Ascending aorta (tissue), 2 donors: ENCODE measurements at regions of chr10 and their contacts with region 1.

Region 1: GRCh38 chr10:27620430-27621397 is 116.6 kb downstream of the RAB18 start:
- DNase-seq: peak in 1 of 2 donors; percentile 81
- H3K4me3 ChIP-seq: peak overlapping the region; percentile 18 to 40
- H3K27ac ChIP-seq: peak overlapping the region; percentile 82 to 86
- H3K4me1 ChIP-seq: peaks cover 4 to 17% of the 10 kb centered on the region in 2 donors
- H3K27me3 ChIP-seq: no peaks in the 10 kb centered on the region
- CTCF ChIP-seq: no peak

Region 2: GRCh38 chr10:27584302-27584701 is 36.4 kb before region 1 on chr10:
- intact Hi-C with region 1: no loop called
- DNase-seq: no peak
- H3K4me3 ChIP-seq: no peak overlapping the region
- H3K27ac ChIP-seq: no peak overlapping the region
- H3K4me1 ChIP-seq: no peaks in the 10 kb centered on the region
- H3K27me3 ChIP-seq: no peaks in the 10 kb centered on the region
- CTCF ChIP-seq: no peak

Region 3: DNA sequence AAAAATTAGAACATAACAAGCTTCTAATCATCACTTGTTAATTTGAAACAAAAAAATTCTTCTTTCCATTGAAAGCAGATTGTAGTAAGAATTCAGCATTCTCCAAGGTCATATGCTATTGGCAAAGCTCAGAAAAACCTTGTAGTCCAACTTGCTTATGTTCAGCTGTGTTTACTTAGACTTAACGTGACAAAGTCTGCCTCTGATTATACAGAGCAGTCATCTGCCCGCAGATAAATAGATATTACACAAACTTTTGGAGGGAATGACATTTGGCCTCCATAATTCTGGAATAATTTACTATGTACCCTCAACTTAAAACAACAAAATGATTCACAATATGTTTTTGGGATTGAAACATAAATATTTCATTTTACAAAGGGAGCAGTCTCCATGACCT is 79.1 kb after region 1 on chr10:
- intact Hi-C with region 1: loop called (anchors 5 kb)
- DNase-seq: no peak
- H3K4me3 ChIP-seq: no peak overlapping the region
- H3K27ac ChIP-seq: no peak overlapping the region
- H3K4me1 ChIP-seq: peaks cover 4 to 17% of the 10 kb centered on the region in 2 donors
- H3K27me3 ChIP-seq: no peaks in the 10 kb centered on the region
- CTCF ChIP-seq: no peak

Region 4: DNA sequence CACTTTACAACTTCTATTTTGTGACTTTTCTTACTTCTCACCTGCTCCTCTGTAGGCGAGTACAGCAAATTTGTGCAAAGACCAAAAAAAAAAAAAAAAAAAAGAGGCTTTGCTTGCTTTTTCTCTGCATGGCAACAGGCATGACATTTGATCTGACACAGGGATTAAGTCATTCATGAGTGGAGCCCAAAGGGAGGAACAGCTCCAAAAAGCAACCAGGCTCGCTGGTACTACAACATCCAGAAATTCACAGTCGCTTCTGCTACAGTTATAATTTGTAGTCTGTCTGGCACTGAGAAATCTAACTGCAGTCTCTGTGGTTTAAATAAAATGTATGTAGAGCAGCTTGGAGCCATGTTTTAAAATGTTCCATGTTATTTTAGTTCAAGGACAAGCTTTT is 93.2 kb after region 1 on chr10:
- intact Hi-C with region 1: loop called (anchors 5 kb)
- DNase-seq: peak in 1 of 2 donors; percentile 78
- H3K4me3 ChIP-seq: peak overlapping the region; percentile 48 to 52
- H3K27ac ChIP-seq: peak overlapping the region; percentile 81 to 85
- H3K4me1 ChIP-seq: peaks cover 5 to 24% of the 10 kb centered on the region in 2 donors
- H3K27me3 ChIP-seq: no peaks in the 10 kb centered on the region
- CTCF ChIP-seq: no peak

Region 5: DNA sequence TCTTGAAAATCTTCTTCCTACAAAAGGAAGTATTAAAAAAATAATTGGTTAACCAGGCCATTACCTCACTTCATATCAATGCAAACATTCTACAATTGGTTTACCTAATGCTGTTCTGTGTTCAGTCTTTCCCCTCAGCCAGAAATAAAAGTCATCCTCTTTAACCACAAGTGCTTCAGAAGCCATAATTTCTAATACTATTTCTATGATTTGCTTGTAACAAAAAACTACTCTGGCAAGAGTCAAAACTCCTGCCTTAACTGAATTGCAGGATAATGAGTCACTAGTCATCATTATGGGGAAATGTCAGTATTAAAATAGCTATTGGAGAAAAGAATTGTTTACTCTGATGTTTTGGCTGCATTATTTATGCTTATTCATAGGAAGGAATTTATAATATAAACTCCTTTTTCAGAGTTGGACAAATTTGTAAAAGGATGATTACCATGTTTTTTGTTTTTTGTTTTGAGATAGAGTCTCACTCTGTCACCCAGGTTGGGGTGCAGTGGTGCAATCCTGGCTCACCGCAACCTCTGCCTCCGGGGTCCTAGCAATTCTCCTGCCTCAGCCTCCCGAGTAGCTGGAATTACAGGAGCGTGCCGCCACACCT is 433.6 kb after region 1 on chr10:
- intact Hi-C with region 1: loop called (anchors 5 kb)
- DNase-seq: no peak
- H3K4me3 ChIP-seq: no peak overlapping the region
- H3K27ac ChIP-seq: peak overlapping the region; percentile 71 to 72
- H3K4me1 ChIP-seq: peaks cover 0 to 12% of the 10 kb centered on the region in 2 donors
- H3K27me3 ChIP-seq: no peaks in the 10 kb centered on the region
- CTCF ChIP-seq: no peak